ENCODE measurements at regions of chr11 and their contacts with region 1.

Region 1: GRCh38 chr11:66809592-66809991 is 33.6 kb upstream of the RCE1 start:
- DNase-seq: no peak
- H3K4me3 ChIP-seq: no peak overlapping the region
- H3K27ac ChIP-seq: no peak overlapping the region
- H3K4me1 ChIP-seq: no peaks in the 10 kb centered on the region
- H3K27me3 ChIP-seq: no peaks in the 10 kb centered on the region
- CTCF ChIP-seq: no peak
- POLR2A ChIP-seq: no peak

Region 2: DNA sequence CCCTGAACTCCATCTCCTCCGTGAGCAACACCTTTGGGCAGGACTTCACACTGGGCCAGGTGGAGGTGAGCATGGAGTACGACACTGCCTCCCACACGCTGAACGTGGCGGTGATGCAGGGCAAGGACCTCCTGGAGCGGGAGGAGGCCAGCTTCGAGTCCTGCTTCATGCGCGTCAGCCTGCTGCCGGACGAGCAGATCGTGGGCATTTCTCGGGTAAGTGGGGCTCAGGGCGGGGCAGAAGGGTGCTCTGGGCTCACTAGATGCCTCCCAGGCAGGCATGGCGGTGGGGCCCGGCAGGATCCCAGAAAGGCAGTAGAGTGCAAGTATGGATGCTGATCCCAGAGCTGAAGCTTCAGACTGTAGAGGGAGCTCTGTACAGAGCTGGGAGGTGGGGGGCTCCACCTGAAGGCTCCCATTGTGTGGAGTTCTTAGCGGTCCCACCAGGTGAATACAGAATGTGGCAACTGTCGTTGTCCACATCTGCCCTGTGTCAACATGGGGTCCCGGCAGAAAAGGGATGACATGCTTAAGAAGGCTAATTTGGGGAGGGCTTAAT is 230.5 kb after region 1 on chr11:
- intact Hi-C with region 1: loop called (anchors 5 kb)
- DNase-seq: no peak
- H3K4me3 ChIP-seq: no peak overlapping the region
- H3K27ac ChIP-seq: no peak overlapping the region
- H3K4me1 ChIP-seq: no peaks in the 10 kb centered on the region
- H3K27me3 ChIP-seq: no peaks in the 10 kb centered on the region
- CTCF ChIP-seq: no peak
- POLR2A ChIP-seq: no peak

Region 3: DNA sequence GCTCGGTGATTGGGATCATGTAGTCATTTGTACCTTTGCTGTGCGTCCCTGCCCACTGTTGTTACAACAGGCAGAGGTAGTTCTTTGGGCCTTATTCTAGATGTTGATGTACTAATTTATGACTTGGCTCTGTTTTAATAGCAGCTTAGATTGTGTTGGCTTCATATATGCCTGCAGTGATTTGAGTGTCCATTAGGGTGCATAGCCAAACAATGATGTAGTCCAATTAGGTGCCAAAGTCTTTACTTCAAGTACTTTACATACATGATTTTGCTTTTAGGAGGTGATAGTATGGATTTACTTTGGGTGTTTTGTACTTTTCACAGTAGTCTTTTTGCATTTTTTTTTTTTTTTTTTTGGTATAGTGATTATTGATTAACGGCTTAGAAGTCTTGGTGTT is 1697.3 kb after region 1 on chr11:
- intact Hi-C with region 1: no loop called
- DNase-seq: no peak
- H3K4me3 ChIP-seq: no peak overlapping the region
- H3K27ac ChIP-seq: no peak overlapping the region
- H3K4me1 ChIP-seq: peaks cover 0 to 6% of the 10 kb centered on the region in 2 donors
- H3K27me3 ChIP-seq: no peaks in the 10 kb centered on the region
- CTCF ChIP-seq: no peak
- POLR2A ChIP-seq: no peak